Sciatic nerve (tissue), 2 donors: ENCODE measurements at regions of chr15 and their contacts with region 1.

Region 1: GRCh38 chr15:63402498-63403253 is 21.0 kb upstream of the CA12 start:
- DNase-seq: no peak
- ATAC-seq: peak; percentile 68

Region 2: GRCh38 chr15:63048115-63048775 is 354.4 kb before region 1 on chr15:
- intact Hi-C with region 1: loop called (anchors 10 kb)
- DNase-seq: peak; percentile 94
- ATAC-seq: peak; percentile 86

Region 3: GRCh38 chr15:63291507-63291906 is 111.2 kb before region 1 on chr15:
- intact Hi-C with region 1: loop called (anchors 5 kb)
- DNase-seq: no peak
- ATAC-seq: no peak